IMR-90 (cell line): ENCODE measurements at regions of chr14 and their contacts with region 1.

Region 1: DNA sequence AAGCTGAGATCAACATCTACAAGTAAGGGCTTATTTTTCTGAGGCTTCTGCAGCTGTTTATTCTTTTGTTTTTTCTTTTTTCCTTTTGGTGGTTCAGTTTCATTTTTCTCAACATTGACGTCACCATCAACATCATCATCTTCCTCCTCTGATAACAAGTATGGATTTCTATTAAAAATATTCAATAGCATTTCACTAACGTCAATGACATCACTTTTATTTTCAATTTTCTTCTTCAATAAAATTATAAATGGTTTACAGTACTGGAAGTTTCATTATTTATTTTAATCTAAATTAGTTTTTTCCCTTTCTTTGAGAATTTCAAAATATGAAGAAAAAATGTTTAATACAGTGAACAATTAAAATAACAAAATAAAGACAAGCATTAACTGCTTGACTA is 23.9 kb downstream of the NEMF start:
- DNase-seq: no peak
- ATAC-seq: no peak
- H3K4me3 ChIP-seq: no peak overlapping the region
- H3K27ac ChIP-seq: no peak overlapping the region
- H3K4me1 ChIP-seq: no peaks in the 10 kb centered on the region
- H3K27me3 ChIP-seq: no peaks in the 10 kb centered on the region
- CTCF ChIP-seq: no peak
- POLR2A ChIP-seq: no peak
- RAD21 ChIP-seq: no peak

Region 2: DNA sequence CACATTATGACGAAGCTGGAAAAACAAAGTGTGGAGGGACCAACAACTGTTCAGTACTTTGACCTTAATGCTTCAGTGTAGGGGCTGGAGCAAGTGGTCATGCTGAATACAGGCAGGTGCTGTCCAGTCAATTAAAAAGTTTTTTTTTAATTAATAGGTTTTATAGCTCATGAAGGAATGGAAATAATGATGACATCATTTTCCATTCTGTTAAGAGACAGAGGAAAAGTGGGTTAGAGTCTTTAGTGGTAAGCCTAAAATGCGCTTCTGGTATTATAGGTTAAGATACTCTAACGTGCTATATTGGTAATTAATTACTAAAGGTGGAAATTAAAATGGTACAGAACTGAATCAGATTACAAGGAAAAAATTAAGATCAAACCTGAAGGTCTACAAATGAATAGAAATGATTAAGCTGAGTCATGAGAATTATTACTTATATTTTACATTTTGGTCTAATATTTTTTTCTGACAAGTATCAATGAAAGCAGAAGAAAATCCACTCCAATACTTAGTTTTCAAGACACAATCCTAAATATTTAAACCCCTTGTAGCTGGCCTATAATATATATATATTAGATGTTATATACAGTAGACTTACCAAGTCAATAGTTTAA is 45.1 kb before region 1 on chr14:
- CTCF ChIA-PET with region 1: no interaction called
- POLR2A ChIA-PET with region 1: no interaction called
- dilution Hi-C with region 1: no loop called
- in situ Hi-C with region 1: no loop called
- intact Hi-C with region 1: loop called (anchors 5 kb)
- DNase-seq: no peak
- ATAC-seq: no peak
- H3K4me3 ChIP-seq: no peak overlapping the region
- H3K27ac ChIP-seq: no peak overlapping the region
- H3K4me1 ChIP-seq: no peaks in the 10 kb centered on the region
- H3K27me3 ChIP-seq: no peaks in the 10 kb centered on the region
- CTCF ChIP-seq: no peak
- POLR2A ChIP-seq: no peak
- RAD21 ChIP-seq: no peak

Region 3: GRCh38 chr14:49796025-49796424 is 32.6 kb before region 1 on chr14:
- CTCF ChIA-PET with region 1: no interaction called
- POLR2A ChIA-PET with region 1: no interaction called
- dilution Hi-C with region 1: no loop called
- in situ Hi-C with region 1: no loop called
- intact Hi-C with region 1: no loop called
- DNase-seq: no peak
- ATAC-seq: no peak
- H3K4me3 ChIP-seq: no peak overlapping the region
- H3K27ac ChIP-seq: no peak overlapping the region
- H3K4me1 ChIP-seq: no peaks in the 10 kb centered on the region
- H3K27me3 ChIP-seq: no peaks in the 10 kb centered on the region
- CTCF ChIP-seq: no peak
- POLR2A ChIP-seq: no peak
- RAD21 ChIP-seq: no peak